Right cardiac atrium (tissue), 5 donors: ENCODE measurements at regions of chr6 and their contacts with region 1.

Region 1: GRCh38 chr6:33199680-33200218 is 716 bp downstream of the RXRB start:
- DNase-seq: peak; percentile 79 to 91 (median 89)
- ATAC-seq: peak; percentile 35 to 59
- H3K4me3 ChIP-seq: peak overlapping the region; percentile 85
- H3K27ac ChIP-seq: peak overlapping the region; percentile 95
- H3K4me1 ChIP-seq: peaks cover 9% of the 10 kb centered on the region
- H3K27me3 ChIP-seq: no peaks in the 10 kb centered on the region

Region 2: DNA sequence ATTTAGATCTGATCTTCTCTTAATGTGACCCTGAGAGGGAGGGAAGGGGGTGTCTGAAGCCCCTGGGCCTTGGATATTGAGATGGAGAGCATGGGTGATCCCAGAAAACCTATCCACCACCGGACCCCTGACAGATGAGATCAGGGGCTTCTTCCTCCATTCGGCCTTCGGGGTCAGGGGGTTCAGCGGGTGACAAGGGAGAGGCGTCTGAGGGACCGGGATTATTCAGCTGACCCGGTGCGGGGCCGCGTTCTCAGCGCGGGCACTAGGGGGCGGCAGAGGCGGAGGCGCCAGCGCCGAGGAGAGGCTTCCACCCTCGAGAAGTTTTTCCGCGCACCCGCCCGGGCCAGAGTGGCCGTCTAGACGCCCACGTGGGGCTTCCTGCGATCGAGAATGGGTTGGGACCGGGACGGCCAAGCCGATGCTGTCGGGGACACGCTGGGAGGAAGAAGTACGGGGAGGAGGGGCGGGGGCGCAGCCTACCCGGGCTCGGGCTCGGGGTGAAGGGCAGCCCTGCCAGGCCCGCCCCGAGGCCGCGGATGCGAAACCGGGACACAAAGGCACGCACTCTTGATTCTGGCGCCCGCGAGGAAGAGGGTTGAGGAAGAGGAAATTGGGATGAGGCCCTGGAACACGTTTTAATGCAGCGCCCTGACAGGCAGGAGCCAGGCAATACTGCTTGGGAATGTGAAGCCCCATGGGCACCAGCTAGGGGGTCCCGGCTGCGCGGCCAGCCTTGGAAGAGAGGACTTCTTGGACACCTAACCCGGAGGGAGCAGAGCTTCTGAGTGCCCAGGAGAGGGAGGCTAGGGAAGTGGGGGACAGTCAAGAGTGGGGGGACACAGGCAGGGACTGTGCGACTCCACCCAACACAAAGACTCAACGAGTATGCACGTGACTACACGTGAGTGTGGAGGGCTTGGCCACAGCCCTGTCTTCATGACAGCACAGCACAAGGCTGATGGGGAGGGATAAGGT is 38.1 kb before region 1 on chr6:
- intact Hi-C with region 1: loop called in 1 of 4 experiments (anchors 5 kb)
- DNase-seq: peak; percentile 87 to 94 (median 93)
- ATAC-seq: peak; percentile 91 to 94
- H3K4me3 ChIP-seq: peak overlapping the region; percentile 41
- H3K27ac ChIP-seq: peak overlapping the region; percentile 9
- H3K4me1 ChIP-seq: no peaks in the 10 kb centered on the region
- H3K27me3 ChIP-seq: no peaks in the 10 kb centered on the region